Naive thymus-derived CD4-positive, alpha-beta T cell (primary cell): ENCODE measurements at regions of chr20 and their contacts with region 1.

Region 1: DNA sequence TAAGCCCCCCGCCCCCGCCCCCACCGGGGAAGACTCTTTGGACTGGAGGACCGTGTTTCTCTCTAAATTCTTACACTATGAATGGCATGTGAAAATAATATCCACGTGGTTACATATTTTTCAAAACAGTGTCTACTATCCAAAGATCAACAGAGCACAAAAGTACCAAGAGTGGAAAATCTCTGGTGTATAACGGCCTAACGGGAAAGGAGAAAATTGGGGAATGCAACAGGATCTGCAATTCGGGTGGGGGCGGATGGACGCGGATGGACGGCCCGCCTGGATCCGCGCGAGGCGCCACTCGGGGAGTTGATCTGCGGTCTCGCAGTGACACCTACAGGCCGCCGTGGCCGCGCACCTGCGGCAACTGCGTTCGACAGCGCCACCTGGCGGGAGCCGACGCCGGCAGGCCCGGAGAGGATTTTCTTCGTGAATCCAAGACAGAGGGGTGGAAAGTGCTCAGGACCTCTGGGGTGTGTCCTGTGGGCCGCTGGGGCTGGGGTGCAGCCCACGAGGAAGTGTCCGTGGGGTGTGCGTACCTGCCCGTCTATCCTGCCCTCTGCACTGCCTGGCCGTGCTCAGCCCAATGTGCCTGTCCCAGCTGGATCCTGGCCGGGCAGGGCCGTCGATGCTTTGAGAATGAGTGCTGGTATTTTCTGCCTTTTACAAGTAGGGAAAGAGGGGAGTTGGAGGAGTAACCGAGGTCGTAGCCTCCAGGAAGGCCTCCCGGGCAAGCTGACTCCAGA is 18.6 kb downstream of the ANKRD60 start:
- DNase-seq: peak; percentile 73 to 93 (median 85)
- ATAC-seq: peak; percentile 96
- H3K4me3 ChIP-seq: no peak overlapping the region
- H3K4me3 Mint-ChIP-seq: peak overlapping the region in 5 of 10 donors; percentile 3 to 62 (median 32)
- H3K27ac ChIP-seq: peak overlapping the region; percentile 39
- H3K27ac Mint-ChIP-seq: peak overlapping the region in 8 of 9 donors; percentile 7 to 83 (median 72)
- H3K4me1 ChIP-seq: peaks cover 0 to 3% of the 10 kb centered on the region in 2 donors
- H3K4me1 Mint-ChIP-seq: peaks cover 0 to 8% (median 0%) of the 10 kb centered on the region in 7 donors
- H3K27me3 ChIP-seq: no peaks in the 10 kb centered on the region
- H3K27me3 Mint-ChIP-seq: peaks cover 0 to 20% (median 4%) of the 10 kb centered on the region in 5 donors

Region 2: DNA sequence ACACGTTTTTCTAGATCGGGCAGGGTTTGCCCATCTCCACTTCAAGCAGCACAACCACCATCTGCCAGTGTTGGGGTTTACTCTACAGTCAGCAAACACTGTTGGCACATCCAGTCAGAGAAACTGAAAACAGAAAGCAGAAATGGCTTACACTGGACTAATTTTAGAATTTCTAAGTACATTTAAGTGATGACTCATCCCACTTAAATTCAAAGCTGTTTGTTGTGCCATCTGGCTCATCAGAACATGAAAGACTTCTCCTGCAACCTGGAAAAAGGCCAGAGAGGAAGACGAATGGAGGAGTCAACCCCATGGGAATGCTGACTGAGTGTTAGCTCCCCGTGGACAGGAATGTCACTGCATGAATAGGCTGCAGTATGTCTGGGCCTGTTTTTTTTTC is 1655.0 kb before region 1 on chr20:
- CTCF ChIA-PET with region 1: no interaction called
- POLR2A ChIA-PET with region 1: no interaction called
- intact Hi-C with region 1: loop called in 1 of 2 experiments (anchors 2 kb)
- DNase-seq: no peak
- ATAC-seq: peak; percentile 58
- H3K4me3 ChIP-seq: no peak overlapping the region
- H3K4me3 Mint-ChIP-seq: peak overlapping the region in 1 of 10 donors; percentile 37
- H3K27ac ChIP-seq: no peak overlapping the region
- H3K27ac Mint-ChIP-seq: no peak overlapping the region
- H3K4me1 ChIP-seq: no peaks in the 10 kb centered on the region
- H3K4me1 Mint-ChIP-seq: peaks cover 0 to 8% (median 0%) of the 10 kb centered on the region in 7 donors
- H3K27me3 ChIP-seq: no peaks in the 10 kb centered on the region
- H3K27me3 Mint-ChIP-seq: peaks cover 0 to 2% (median 0%) of the 10 kb centered on the region in 5 donors

Region 3: GRCh38 chr20:57383447-57384347 is 826.1 kb before region 1 on chr20:
- CTCF ChIA-PET with region 1: interaction called, 3 read pairs
- POLR2A ChIA-PET with region 1: no interaction called
- intact Hi-C with region 1: loop called in 1 of 2 experiments (anchors 5 kb)
- DNase-seq: no peak
- ATAC-seq: no peak
- H3K4me3 ChIP-seq: no peak overlapping the region
- H3K4me3 Mint-ChIP-seq: no peak overlapping the region
- H3K27ac ChIP-seq: no peak overlapping the region
- H3K27ac Mint-ChIP-seq: peak overlapping the region in 3 of 9 donors; percentile 45 to 77 (median 71)
- H3K4me1 ChIP-seq: peaks cover 6 to 12% of the 10 kb centered on the region in 2 donors
- H3K4me1 Mint-ChIP-seq: peaks cover 7 to 32% (median 20%) of the 10 kb centered on the region in 7 donors
- H3K27me3 ChIP-seq: no peaks in the 10 kb centered on the region
- H3K27me3 Mint-ChIP-seq: no peaks in the 10 kb centered on the region

Region 4: DNA sequence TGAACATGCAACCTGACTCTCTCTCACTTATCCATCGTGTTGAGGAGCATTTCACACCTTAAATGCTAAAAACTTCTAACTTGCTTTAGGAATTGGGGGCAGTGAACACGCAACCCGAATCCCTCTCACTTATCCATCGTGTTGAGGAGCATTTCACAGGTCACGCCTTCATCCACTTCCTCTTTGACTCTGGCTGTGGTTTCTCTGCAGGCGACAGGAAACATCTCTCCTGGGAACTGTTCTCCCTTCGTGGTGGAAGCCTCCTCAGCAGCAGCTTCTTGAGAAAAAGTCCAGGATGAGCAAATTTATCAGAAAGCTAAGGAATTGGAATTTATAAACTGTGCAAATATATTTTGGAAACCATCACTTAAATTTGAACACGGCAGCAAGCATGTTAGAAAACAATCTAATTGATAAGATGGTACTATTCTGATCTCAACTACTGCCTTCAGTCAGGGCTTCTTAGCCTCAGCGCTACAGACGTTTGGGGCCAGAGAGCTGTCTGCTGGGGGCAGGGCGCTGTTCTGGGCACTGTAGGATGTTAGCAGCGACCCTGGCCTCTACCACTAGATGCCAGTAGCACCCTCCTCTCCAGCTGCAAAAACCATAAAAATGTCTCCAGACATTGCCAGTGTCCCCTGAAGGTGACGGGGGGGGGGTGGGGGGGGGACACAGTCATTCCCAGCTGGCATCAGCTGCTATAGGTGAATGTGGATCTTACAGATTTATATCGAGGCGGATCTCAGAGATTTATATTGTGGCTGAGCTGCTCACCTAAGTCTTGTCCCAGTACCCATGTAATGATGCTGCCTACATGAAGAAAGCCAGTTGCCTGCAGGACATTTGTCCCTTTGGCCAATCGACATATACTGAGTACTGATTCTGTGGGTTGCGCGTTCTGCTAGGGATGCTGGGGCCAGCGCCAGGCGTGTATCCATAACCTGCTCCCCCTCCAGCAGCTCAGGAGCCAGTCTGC is 711.1 kb before region 1 on chr20:
- CTCF ChIA-PET with region 1: no interaction called
- POLR2A ChIA-PET with region 1: no interaction called
- intact Hi-C with region 1: loop called in 1 of 2 experiments (anchors 5 kb)
- DNase-seq: peak in 5 of 9 donors; percentile 19 to 43 (median 24)
- ATAC-seq: peak; percentile 78
- H3K4me3 ChIP-seq: no peak overlapping the region
- H3K4me3 Mint-ChIP-seq: peak overlapping the region in 5 of 10 donors; percentile 3 to 33 (median 20)
- H3K27ac ChIP-seq: no peak overlapping the region
- H3K27ac Mint-ChIP-seq: peak overlapping the region in 2 of 9 donors; percentile 55 to 60
- H3K4me1 ChIP-seq: peaks cover 6 to 11% of the 10 kb centered on the region in 2 donors
- H3K4me1 Mint-ChIP-seq: peaks cover 12 to 15% (median 13%) of the 10 kb centered on the region in 7 donors
- H3K27me3 ChIP-seq: peaks cover 0 to 5% of the 10 kb centered on the region in 2 donors
- H3K27me3 Mint-ChIP-seq: peaks cover 11 to 72% (median 30%) of the 10 kb centered on the region in 5 donors

Region 5: GRCh38 chr20:57514273-57514751 is 695.5 kb before region 1 on chr20:
- CTCF ChIA-PET with region 1: interaction called, 4 read pairs
- POLR2A ChIA-PET with region 1: no interaction called
- intact Hi-C with region 1: loop called (anchors 1 kb)
- DNase-seq: peak in 6 of 9 donors; percentile 13 to 31 (median 23)
- ATAC-seq: peak; percentile 45
- H3K4me3 ChIP-seq: no peak overlapping the region
- H3K4me3 Mint-ChIP-seq: no peak overlapping the region
- H3K27ac ChIP-seq: no peak overlapping the region
- H3K27ac Mint-ChIP-seq: peak overlapping the region in 1 of 9 donors; percentile 27
- H3K4me1 ChIP-seq: no peaks in the 10 kb centered on the region
- H3K4me1 Mint-ChIP-seq: no peaks in the 10 kb centered on the region
- H3K27me3 ChIP-seq: peaks cover 0 to 3% of the 10 kb centered on the region in 2 donors
- H3K27me3 Mint-ChIP-seq: peaks cover 0 to 14% (median 5%) of the 10 kb centered on the region in 5 donors

Region 6: GRCh38 chr20:57654363-57654997 is 555.3 kb before region 1 on chr20:
- CTCF ChIA-PET with region 1: no interaction called
- POLR2A ChIA-PET with region 1: no interaction called
- intact Hi-C with region 1: loop called in 1 of 2 experiments (anchors 1 kb)
- DNase-seq: peak in 8 of 9 donors; percentile 26 to 68 (median 59)
- ATAC-seq: peak; percentile 80
- H3K4me3 ChIP-seq: no peak overlapping the region
- H3K4me3 Mint-ChIP-seq: peak overlapping the region in 3 of 10 donors; percentile 2 to 46 (median 19)
- H3K27ac ChIP-seq: no peak overlapping the region
- H3K27ac Mint-ChIP-seq: peak overlapping the region in 5 of 9 donors; percentile 19 to 92 (median 56)
- H3K4me1 ChIP-seq: peaks cover 13 to 17% of the 10 kb centered on the region in 2 donors
- H3K4me1 Mint-ChIP-seq: peaks cover 14 to 42% (median 34%) of the 10 kb centered on the region in 7 donors
- H3K27me3 ChIP-seq: no peaks in the 10 kb centered on the region
- H3K27me3 Mint-ChIP-seq: peaks cover 0 to 11% (median 0%) of the 10 kb centered on the region in 5 donors

Region 7: DNA sequence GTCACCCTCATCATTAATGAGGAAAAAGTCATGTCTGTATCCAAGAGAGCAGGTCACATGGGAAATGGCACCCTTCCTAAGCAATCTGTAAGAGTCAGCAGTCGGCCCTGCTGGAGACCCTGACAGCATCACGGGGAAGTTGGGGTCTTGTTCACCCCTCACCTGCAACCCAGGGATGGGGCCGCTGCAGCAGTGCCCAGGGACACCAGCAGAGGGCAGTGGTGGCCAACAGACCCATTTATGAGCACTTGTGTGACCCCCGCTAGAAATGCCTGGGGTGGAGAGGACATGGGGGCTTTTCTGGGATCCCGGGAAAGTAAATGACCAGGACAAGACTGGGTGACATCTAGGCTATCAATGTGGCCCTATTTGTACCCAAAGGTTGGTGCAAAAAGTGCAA is 17.3 kb before region 1 on chr20:
- CTCF ChIA-PET with region 1: interaction called, 6 read pairs
- POLR2A ChIA-PET with region 1: no interaction called
- intact Hi-C with region 1: loop called in 1 of 2 experiments (anchors 1 kb)
- DNase-seq: peak in 5 of 9 donors; percentile 14 to 33 (median 23)
- ATAC-seq: peak; percentile 44
- H3K4me3 ChIP-seq: no peak overlapping the region
- H3K4me3 Mint-ChIP-seq: no peak overlapping the region
- H3K27ac ChIP-seq: no peak overlapping the region
- H3K27ac Mint-ChIP-seq: peak overlapping the region in 1 of 9 donors; percentile 78
- H3K4me1 ChIP-seq: no peaks in the 10 kb centered on the region
- H3K4me1 Mint-ChIP-seq: no peaks in the 10 kb centered on the region
- H3K27me3 ChIP-seq: no peaks in the 10 kb centered on the region
- H3K27me3 Mint-ChIP-seq: peaks cover 0 to 20% (median 13%) of the 10 kb centered on the region in 5 donors